ENCODE measurements at regions of chr6 and their contacts with region 1.

Region 1: DNA sequence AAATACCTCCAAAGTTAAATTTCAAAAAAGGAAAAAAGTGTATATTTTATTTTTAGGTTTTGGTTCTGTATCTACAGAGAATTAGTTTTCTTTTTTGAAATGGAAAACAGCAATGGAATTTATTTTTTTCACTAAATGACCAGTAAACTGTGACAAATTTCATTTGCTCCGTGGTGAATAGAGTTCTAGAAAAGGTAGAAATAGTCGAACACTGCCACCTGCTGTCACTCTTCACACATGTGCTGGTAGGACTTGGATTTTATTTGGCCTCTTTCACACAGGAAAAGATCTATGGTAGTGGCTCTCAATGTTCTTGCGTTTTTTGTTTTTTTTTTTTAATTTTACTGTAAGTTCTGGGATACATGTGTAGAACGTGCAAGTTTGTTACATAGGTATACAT is 312.5 kb downstream of the EYA4 start:
- DNase-seq: peak in 4 of 5 donors; percentile 39 to 65 (median 44)
- H3K4me3 ChIP-seq: no peak overlapping the region
- H3K27ac ChIP-seq: no peak overlapping the region
- H3K4me1 ChIP-seq: peaks cover 5% of the 10 kb centered on the region
- H3K27me3 ChIP-seq: no peaks in the 10 kb centered on the region
- CTCF ChIP-seq: peak; percentile 46 to 52 (median 47)
- EP300 ChIP-seq: no peak
- POLR2A ChIP-seq: no peak

Region 2: GRCh38 chr6:132830334-132830751 is 723.3 kb before region 1 on chr6:
- intact Hi-C with region 1: loop called in 1 of 4 experiments (anchors 5 kb)
- DNase-seq: no peak
- H3K4me3 ChIP-seq: no peak overlapping the region
- H3K27ac ChIP-seq: no peak overlapping the region
- H3K4me1 ChIP-seq: no peaks in the 10 kb centered on the region
- H3K27me3 ChIP-seq: no peaks in the 10 kb centered on the region
- CTCF ChIP-seq: peak in 1 of 3 donors; percentile 22
- EP300 ChIP-seq: no peak
- POLR2A ChIP-seq: no peak

Region 3: DNA sequence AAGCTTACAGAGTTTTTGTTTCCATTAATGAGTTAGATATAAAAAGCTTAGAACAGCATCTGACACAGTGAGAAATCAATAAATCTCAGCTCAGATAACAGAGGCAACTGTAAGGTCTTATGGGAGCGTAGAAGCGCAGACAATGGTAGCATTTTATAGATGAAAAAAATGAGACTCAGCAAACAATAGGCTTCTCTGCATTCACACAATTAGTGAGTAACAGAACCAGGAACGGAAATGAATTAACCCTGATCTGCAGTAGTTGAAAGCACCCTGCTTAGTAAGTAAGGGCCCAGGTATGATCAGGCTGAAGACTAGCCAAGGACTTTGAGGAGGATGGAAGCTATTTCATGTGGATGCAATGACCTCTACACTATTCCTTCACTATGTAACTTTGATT is 459.7 kb before region 1 on chr6:
- intact Hi-C with region 1: no loop called
- DNase-seq: no peak
- H3K4me3 ChIP-seq: no peak overlapping the region
- H3K27ac ChIP-seq: no peak overlapping the region
- H3K4me1 ChIP-seq: no peaks in the 10 kb centered on the region
- H3K27me3 ChIP-seq: no peaks in the 10 kb centered on the region
- CTCF ChIP-seq: no peak
- EP300 ChIP-seq: no peak
- POLR2A ChIP-seq: no peak

Region 4: GRCh38 chr6:133227344-133227743 is 326.3 kb before region 1 on chr6:
- intact Hi-C with region 1: no loop called
- DNase-seq: no peak
- H3K4me3 ChIP-seq: no peak overlapping the region
- H3K27ac ChIP-seq: no peak overlapping the region
- H3K4me1 ChIP-seq: no peaks in the 10 kb centered on the region
- H3K27me3 ChIP-seq: no peaks in the 10 kb centered on the region
- CTCF ChIP-seq: no peak
- EP300 ChIP-seq: no peak
- POLR2A ChIP-seq: no peak

Region 5: GRCh38 chr6:133286765-133287164 is 266.9 kb before region 1 on chr6:
- intact Hi-C with region 1: no loop called
- DNase-seq: no peak
- H3K4me3 ChIP-seq: no peak overlapping the region
- H3K27ac ChIP-seq: no peak overlapping the region
- H3K4me1 ChIP-seq: peaks cover 6% of the 10 kb centered on the region
- H3K27me3 ChIP-seq: no peaks in the 10 kb centered on the region
- CTCF ChIP-seq: no peak
- EP300 ChIP-seq: no peak
- POLR2A ChIP-seq: no peak

Region 6: GRCh38 chr6:134097114-134097707 is 543.6 kb after region 1 on chr6:
- intact Hi-C with region 1: loop called in 1 of 4 experiments (anchors 10 kb)
- DNase-seq: peak; percentile 55 to 73 (median 62)
- H3K4me3 ChIP-seq: no peak overlapping the region
- H3K27ac ChIP-seq: no peak overlapping the region
- H3K4me1 ChIP-seq: no peaks in the 10 kb centered on the region
- H3K27me3 ChIP-seq: no peaks in the 10 kb centered on the region
- CTCF ChIP-seq: peak in 2 of 3 donors; percentile 57 to 68
- EP300 ChIP-seq: no peak
- POLR2A ChIP-seq: no peak